Caco-2 (cell line): ENCODE measurements at regions of chr2 and their contacts with region 1.

Region 1: DNA sequence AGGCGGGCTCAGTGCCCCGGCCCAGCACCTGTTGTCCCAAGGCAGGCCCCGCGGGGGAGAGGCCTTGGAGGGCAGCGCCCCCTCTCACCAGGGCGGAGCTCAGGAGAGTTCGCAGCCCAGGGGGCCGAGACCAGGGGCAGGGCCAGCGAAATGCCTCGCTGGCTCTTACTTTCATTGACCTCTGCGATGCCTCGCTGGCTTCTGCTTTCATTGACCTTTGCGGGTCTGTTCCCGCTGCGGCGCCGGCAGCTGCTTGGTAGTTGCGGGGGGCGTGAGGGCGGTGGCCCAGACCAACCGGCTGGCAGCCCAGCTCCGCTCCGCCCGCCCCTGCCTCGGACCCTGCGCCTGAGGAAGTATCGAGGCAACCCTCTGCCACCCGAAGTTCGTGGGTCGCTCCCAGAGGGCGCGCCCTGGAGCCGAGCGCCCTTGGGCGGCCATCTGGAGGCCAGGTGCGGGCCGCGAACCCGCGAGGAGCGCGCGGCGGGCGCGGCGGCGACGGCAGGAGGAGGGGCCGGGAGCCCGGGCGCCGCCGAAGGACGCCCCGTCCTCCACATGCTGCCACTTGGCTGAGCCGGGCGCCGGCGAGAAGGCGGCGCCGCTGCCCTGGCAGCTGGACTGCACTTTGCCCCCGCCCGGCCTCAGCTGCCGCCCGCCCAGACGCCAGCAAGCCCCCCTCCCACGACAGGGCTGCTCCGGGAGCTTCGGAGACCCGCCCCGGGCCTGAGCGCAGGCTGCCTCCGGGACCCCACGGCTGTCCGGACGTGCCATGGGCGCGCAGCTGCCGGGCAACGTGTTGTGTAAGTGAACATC is 118.0 kb upstream of the MSTN start:
- DNase-seq: peak; percentile 84 to 89
- H3K4me3 ChIP-seq: peak overlapping the region; percentile 78
- H3K4me3 Mint-ChIP-seq: peak overlapping the region; percentile 83
- H3K27ac Mint-ChIP-seq: no peak overlapping the region
- H3K4me1 ChIP-seq: 0 out of 2 replicates have a peak, but pooled peaks cover 4% of the 10 kb centered on the region
- H3K4me1 Mint-ChIP-seq: peaks cover 6% of the 10 kb centered on the region
- H3K27me3 ChIP-seq: no peaks in the 10 kb centered on the region
- H3K27me3 Mint-ChIP-seq: no peaks in the 10 kb centered on the region
- CTCF ChIP-seq: peak; percentile 47 to 92

Region 2: GRCh38 chr2:189783927-189784867 is 396.3 kb before region 1 on chr2 and contains the starts of genes ORMDL1 and PMS1:
- CTCF ChIA-PET with region 1: no interaction called
- POLR2A ChIA-PET with region 1: no interaction called
- intact Hi-C with region 1: loop called (anchors 10 kb)
- DNase-seq: peak; percentile 95 to 98
- H3K4me3 ChIP-seq: peak within 1 kb of the TSS; percentile 88
- H3K4me3 Mint-ChIP-seq: peak within 1 kb of the TSS; percentile 83
- H3K27ac Mint-ChIP-seq: peak within 1 kb of the TSS; percentile 82
- H3K4me1 ChIP-seq: peaks cover 5% of the 10 kb centered on the region; the same call in 1 of the 2 replicates
- H3K4me1 Mint-ChIP-seq: peaks cover 23% of the 10 kb centered on the region
- H3K27me3 ChIP-seq: no peaks in the 10 kb centered on the region
- H3K27me3 Mint-ChIP-seq: no peaks in the 10 kb centered on the region
- CTCF ChIP-seq: no peak
- total RNA-seq, gene ORMDL1: 52.1 and 52.7 TPM in 2 replicates
- total RNA-seq, gene PMS1: 38.1 and 40.2 TPM in 2 replicates

Region 3: DNA sequence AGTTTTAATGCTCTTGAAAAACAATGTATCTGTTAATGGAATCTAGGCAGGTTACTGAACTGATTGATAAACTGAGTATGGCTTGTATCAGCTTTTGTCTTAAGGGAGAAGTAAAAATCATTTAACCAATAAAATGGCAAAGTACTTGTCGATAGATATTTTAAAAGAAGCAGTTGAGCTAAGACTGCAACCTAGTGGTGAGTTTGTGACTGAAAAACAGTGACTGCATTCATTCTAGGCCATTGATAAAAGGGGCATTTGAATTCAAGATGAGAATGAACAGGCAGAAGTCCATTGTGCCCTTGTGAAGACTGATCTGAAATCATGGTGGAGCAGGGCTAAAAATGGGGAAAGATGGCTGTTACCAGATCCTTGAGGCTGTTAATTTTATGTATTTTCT is 58.5 kb before region 1 on chr2:
- CTCF ChIA-PET with region 1: interaction called, 4 read pairs
- POLR2A ChIA-PET with region 1: no interaction called
- intact Hi-C with region 1: loop called (anchors 1 kb)
- DNase-seq: peak in 1 of 2 experiments; percentile 17
- H3K4me3 ChIP-seq: no peak overlapping the region
- H3K4me3 Mint-ChIP-seq: no peak overlapping the region
- H3K27ac Mint-ChIP-seq: no peak overlapping the region
- H3K4me1 ChIP-seq: no peaks in the 10 kb centered on the region
- H3K4me1 Mint-ChIP-seq: no peaks in the 10 kb centered on the region
- H3K27me3 ChIP-seq: no peaks in the 10 kb centered on the region
- H3K27me3 Mint-ChIP-seq: no peaks in the 10 kb centered on the region
- CTCF ChIP-seq: peak; percentile 31 to 57

Region 4: GRCh38 chr2:190136259-190136658 is 44.3 kb before region 1 on chr2:
- CTCF ChIA-PET with region 1: no interaction called
- POLR2A ChIA-PET with region 1: no interaction called
- intact Hi-C with region 1: loop called (anchors 1 kb)
- DNase-seq: peak; percentile 61 to 77
- H3K4me3 ChIP-seq: no peak overlapping the region
- H3K4me3 Mint-ChIP-seq: no peak overlapping the region
- H3K27ac Mint-ChIP-seq: no peak overlapping the region
- H3K4me1 ChIP-seq: peaks cover 18% of the 10 kb centered on the region
- H3K4me1 Mint-ChIP-seq: peaks cover 7% of the 10 kb centered on the region
- H3K27me3 ChIP-seq: no peaks in the 10 kb centered on the region
- H3K27me3 Mint-ChIP-seq: no peaks in the 10 kb centered on the region
- CTCF ChIP-seq: no peak

Region 5: GRCh38 chr2:190277234-190278112 is 97.0 kb after region 1 on chr2:
- CTCF ChIA-PET with region 1: no interaction called
- POLR2A ChIA-PET with region 1: no interaction called
- intact Hi-C with region 1: loop called (anchors 2 kb)
- DNase-seq: peak in 1 of 2 experiments; percentile 23
- H3K4me3 ChIP-seq: no peak overlapping the region
- H3K4me3 Mint-ChIP-seq: no peak overlapping the region
- H3K27ac Mint-ChIP-seq: no peak overlapping the region
- H3K4me1 ChIP-seq: peaks cover 27% of the 10 kb centered on the region
- H3K4me1 Mint-ChIP-seq: peaks cover 23% of the 10 kb centered on the region
- H3K27me3 ChIP-seq: no peaks in the 10 kb centered on the region
- H3K27me3 Mint-ChIP-seq: no peaks in the 10 kb centered on the region
- CTCF ChIP-seq: peak; percentile 31 to 39